ENCODE measurements at regions of chr16 and their contacts with region 1.

Region 1: DNA sequence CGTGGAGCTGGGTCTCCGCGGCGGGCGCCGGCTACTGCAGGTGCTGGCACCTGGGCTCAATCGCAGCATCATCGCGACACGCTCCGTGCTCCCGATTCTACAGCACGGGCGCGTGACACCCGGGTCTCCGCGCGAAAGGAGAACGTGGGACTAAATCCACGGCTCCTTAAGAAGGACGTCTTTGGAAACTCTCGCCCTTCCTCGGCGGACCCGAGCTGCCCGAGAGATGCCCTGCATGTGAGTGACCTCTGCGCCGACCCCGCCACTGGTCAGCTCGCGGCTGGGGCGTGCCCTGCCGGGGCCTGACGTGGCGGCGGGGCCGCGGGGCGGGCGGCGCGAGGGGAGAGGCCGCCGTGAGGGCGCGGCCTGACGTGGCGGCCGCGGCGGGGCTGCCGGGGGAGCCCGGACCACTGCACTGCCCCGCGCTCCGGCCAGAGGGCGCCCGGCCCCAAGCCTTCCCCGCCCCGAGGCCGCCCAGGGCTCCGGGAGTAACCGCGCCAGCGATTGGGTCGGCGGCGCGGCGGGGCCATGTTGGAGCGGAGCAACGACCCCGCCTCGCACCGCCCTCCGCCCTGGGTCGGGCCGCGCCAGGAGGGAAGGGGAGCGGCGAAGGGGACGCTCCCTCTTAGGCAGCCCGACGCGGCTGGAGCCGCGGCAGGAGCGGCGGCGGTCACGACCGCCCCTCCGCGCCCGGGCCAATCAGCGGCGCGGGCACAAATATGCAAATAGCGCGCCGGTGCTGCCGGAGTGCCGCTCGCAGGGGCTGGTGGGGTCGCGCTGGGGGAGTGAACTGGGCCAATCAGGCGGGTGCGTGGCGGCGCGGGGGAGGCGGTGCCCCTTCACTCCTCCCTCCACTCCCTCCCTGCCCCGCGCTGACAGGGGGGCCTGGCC is 75.6 kb downstream of the CHD9 start:
- DNase-seq: peak; percentile 66
- H3K4me3 ChIP-seq: peak overlapping the region; percentile 80
- CTCF ChIP-seq: peak; percentile 74

Region 2: GRCh38 chr16:52896484-52897164 is 233.8 kb before region 1 on chr16:
- CTCF ChIA-PET with region 1: no interaction called
- POLR2A ChIA-PET with region 1: no interaction called
- DNase-seq: no peak
- H3K4me3 ChIP-seq: no peak overlapping the region
- CTCF ChIP-seq: no peak

Region 3: GRCh38 chr16:53014287-53014686 is 116.1 kb before region 1 on chr16:
- CTCF ChIA-PET with region 1: no interaction called
- POLR2A ChIA-PET with region 1: no interaction called
- DNase-seq: no peak
- H3K4me3 ChIP-seq: no peak overlapping the region
- CTCF ChIP-seq: no peak

Region 4: DNA sequence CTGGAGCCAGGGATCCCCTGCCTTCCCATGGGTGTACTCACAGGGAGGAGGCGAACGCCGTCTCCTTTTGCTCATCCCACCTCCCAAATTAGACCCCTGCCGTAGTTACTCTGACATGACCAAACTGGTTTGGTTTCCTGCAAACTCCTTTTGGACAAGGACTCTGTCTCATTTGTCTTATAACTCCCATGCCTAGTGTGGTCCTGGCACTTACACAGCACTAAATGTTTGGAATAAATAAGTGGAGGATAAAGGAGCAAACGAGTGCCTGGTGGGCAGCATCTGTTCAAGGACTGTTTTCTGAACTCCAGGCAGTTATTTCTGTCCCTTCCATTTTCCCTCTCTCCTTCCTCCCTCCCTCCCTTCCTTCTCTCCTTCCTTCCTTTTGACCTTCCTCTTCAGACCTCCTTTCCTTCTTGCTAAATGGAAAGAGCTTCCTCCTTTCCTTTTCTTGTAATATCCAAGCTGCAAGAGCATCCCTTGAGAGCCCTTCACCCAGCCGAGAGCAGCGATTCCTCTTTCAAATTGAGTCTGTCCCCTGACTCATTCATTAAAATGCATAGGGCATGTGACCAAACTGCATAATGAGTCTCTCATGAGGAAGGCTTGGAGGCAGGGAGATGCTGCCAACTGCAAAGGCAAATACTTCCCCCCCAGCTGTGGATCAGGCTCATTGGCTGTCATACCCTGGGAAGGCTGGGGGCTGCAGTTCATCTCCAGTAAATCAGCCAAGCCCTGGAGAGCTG is 38.8 kb before region 1 on chr16:
- CTCF ChIA-PET with region 1: no interaction called
- POLR2A ChIA-PET with region 1: interaction called, 14 read pairs
- DNase-seq: peak; percentile 81
- H3K4me3 ChIP-seq: peak overlapping the region; percentile 21
- CTCF ChIP-seq: no peak